H1 (cell line): ENCODE measurements at regions of chr10 and their contacts with region 1.

Region 1: DNA sequence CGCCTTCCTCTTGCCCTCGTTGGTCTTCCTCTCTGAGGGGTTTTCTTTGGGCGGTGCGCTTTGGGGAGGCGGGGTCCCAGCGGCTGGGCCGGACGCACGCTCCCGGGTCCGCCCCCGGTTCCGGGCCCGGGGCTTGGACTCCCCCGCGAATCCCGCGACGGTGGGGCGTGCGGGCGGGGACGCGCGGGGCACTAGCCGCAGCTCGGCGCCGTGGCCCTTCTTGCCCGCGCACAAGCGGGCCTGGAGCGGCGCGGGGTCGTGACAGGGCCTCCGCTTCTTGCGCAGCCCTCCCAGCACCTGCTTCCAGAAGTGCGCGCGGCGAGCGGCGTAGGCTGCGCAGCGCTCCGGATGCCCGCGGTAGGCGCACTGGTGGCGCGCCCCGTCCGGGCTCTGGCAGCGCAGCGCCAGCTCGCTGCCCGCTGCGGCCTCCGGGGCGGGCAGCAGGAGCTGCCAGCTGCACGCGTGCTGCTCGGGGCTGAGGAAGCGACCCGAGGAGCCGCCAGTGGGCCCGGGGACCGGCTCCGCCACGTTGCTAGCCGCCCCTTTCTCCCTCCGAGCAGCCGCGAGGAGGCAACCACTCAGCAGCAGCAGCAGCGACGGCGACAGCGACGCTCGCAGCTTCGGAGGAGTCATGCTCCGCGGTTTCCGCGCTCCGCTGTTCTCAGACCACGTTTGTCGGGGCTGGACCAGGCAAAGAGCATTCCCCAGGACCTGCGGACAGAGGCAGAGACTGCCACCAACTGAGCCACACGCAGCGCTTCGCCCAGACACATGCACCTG is 759 bp downstream of the FGFBP3 start:
- DNase-seq: peak in 1 of 2 experiments; percentile 85
- H3K4me3 ChIP-seq: peak overlapping the region; percentile 69 to 88 (median 80)
- H3K27ac ChIP-seq: peak overlapping the region; percentile 64; the same call in 1 of the 2 replicates
- H3K4me1 ChIP-seq: peaks cover 1 to 7% (median 4%) of the 10 kb centered on the region in 4 experiments; a peak in 3 of 7 replicates
- H3K27me3 ChIP-seq: no peaks in the 10 kb centered on the region
- CTCF ChIP-seq: peak; percentile 61 to 65 (median 61)
- EP300 ChIP-seq: no peak
- POLR2A ChIP-seq: peak; percentile 3 to 73
- RAD21 ChIP-seq: peak; percentile 39 to 47; a peak in 3 of 4 replicates

Region 2: GRCh38 chr10:91758303-91759146 is 150.0 kb before region 1 on chr10:
- CTCF ChIA-PET with region 1: interaction called, 14 read pairs
- POLR2A ChIA-PET with region 1: interaction called, 4 read pairs
- DNase-seq: no peak
- H3K4me3 ChIP-seq: no peak overlapping the region
- H3K27ac ChIP-seq: no peak overlapping the region
- H3K4me1 ChIP-seq: no peaks in the 10 kb centered on the region
- H3K27me3 ChIP-seq: no peaks in the 10 kb centered on the region
- CTCF ChIP-seq: peak in 2 of 3 experiments; percentile 64 to 66; a peak in 2 of 4 replicates
- EP300 ChIP-seq: no peak
- POLR2A ChIP-seq: no peak
- RAD21 ChIP-seq: peak; percentile 93 to 95

Region 3: DNA sequence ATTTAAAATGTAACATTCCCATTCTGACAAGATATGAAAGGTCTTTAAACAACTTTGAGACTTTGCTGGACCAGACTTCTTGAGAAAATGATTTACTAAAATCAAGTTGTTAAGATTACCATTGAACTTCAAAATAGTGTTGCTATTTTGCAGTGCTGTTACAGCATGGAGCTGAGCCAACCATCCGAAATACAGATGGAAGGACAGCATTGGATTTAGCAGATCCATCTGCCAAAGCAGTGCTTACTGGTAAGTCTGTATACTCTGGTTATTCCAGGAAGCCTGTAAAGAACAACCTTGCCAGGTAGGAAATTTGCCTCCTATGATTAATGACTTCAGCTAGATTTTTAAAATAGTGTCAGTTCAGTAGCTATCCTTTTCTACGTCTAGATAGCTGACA is 91.5 kb before region 1 on chr10:
- CTCF ChIA-PET with region 1: interaction called, 11 read pairs
- POLR2A ChIA-PET with region 1: no interaction called
- DNase-seq: no peak
- H3K4me3 ChIP-seq: no peak overlapping the region
- H3K27ac ChIP-seq: no peak overlapping the region
- H3K4me1 ChIP-seq: no peaks in the 10 kb centered on the region
- H3K27me3 ChIP-seq: no peaks in the 10 kb centered on the region
- CTCF ChIP-seq: no peak
- EP300 ChIP-seq: no peak
- POLR2A ChIP-seq: no peak
- RAD21 ChIP-seq: no peak

Region 4: DNA sequence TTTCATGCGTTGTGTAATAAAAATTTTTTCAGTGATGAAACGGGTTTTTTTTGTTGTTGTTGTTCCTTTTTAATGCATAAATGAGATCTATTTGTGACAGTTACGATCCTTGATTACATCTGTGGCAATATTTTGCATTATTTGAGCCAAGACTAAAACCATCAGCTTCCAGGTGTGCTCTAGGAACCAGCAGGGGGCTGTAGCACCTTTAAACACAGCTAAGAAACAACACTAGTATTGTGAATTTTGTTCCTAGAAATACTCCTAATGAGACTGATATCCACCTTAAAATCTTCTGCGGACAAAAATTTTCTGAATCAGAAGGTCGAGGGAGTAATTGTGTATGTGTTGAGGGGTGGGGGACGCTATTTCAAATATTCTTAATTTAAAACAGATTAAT is 51.9 kb before region 1 on chr10:
- CTCF ChIA-PET with region 1: interaction called, 16 read pairs
- POLR2A ChIA-PET with region 1: interaction called, 4 read pairs
- DNase-seq: no peak
- H3K4me3 ChIP-seq: no peak overlapping the region
- H3K27ac ChIP-seq: no peak overlapping the region
- H3K4me1 ChIP-seq: no peaks in the 10 kb centered on the region
- H3K27me3 ChIP-seq: no peaks in the 10 kb centered on the region
- CTCF ChIP-seq: peak in 2 of 3 experiments; percentile 42; a peak in 2 of 4 replicates
- EP300 ChIP-seq: no peak
- POLR2A ChIP-seq: no peak
- RAD21 ChIP-seq: peak; percentile 61 to 70

Region 5: DNA sequence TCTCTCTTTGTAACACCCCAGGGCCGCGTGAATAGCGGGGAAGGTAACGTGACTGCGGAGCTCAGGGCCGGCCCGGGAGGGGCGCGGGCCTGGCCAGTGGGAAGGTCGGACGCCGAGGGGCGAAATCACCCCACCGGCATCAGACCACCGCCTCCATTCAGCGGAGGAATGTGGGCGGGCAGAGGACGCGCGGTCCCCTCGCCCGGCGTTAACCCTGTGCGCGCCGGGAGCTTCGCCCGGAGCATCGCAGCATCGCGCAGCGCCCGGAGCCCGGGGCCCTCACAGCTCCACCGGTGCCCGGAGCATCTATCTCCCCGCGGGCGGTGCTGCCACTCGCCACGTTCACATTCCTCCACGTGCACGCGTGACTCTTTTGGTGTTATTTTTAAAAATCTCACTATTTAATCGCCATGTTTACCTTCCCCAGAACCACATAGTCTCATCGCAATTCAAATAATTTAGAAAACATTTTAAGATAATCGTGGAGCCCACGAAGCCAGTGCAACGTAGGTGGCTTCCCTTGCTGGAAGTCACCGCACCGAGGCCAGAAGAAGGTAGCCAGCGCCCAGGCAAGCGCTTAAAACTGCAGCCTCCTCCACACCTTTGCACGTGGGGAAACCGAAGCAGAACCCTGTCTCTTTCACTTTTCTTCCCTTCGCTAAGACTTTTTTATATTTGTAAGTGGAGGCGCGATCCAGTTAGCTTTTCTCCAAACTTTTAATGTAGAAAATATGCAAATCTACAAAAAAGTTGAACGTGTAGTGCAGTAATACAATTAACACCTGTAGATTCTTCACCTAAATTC is 21.1 kb before region 1 on chr10:
- CTCF ChIA-PET with region 1: interaction called, 10 read pairs
- POLR2A ChIA-PET with region 1: interaction called, 26 read pairs
- DNase-seq: peak; percentile 89 to 90
- H3K4me3 ChIP-seq: peak overlapping the region; percentile 18 to 48 (median 27); a peak in 5 of 8 replicates
- H3K27ac ChIP-seq: peak overlapping the region; percentile 74
- H3K4me1 ChIP-seq: peaks cover 11 to 31% (median 23%) of the 10 kb centered on the region in 4 experiments
- H3K27me3 ChIP-seq: no peaks in the 10 kb centered on the region
- CTCF ChIP-seq: no peak
- EP300 ChIP-seq: peak in 1 of 2 experiments; percentile 84; a peak in 1 of 3 replicates
- POLR2A ChIP-seq: peak; percentile 31 to 80
- RAD21 ChIP-seq: no peak

Region 6: DNA sequence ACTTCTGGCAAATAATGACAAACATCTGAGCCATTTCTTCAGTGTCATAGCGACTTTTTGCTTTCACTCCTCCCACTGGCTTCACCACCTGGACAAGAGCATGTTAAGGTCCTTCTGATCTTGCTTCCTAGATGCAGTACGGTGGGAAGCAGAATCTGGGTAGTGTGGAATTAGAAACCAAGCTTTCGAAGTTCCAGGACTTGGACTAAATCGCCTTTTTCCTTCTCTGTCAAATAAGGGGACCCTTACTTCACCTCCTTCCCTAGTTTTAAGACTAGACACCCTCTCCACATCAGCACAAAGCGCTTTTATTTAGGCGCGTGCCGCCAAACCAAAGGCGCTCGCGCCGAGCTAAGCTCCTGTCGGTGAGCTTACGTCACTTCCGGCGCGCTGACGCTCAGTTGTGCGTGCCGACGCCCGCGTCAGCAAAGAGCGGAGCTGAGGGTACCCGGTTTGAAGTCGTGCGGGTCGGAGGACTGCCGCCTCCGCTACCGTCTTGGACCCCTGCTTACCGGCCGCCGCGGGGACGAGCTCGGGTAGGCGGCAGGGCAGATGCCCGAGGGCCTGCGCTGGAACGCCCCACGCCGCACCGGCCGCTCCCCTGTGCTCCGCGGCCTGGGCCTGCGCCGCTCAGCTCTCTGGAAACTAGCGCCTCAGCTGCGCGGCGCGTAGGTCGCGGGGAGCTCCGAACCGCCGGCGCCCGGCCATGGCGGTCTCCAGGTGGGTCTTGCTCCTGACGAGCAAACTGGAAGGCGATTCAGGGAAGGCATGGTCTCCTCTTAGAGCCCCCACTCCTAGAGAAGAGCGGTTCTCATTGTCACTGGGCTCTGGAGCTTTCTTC is 15.1 kb after region 1 on chr10 and contains the start of gene BTAF1:
- CTCF ChIA-PET with region 1: interaction called, 8 read pairs
- POLR2A ChIA-PET with region 1: interaction called, 14 read pairs
- DNase-seq: peak; percentile 86 to 90
- H3K4me3 ChIP-seq: peak within 1 kb of the TSS; percentile 72 to 87 (median 76)
- H3K27ac ChIP-seq: peak within 1 kb of the TSS; percentile 89
- H3K4me1 ChIP-seq: no peaks in the 10 kb centered on the region; a peak in 1 of 7 replicates
- H3K27me3 ChIP-seq: no peaks in the 10 kb centered on the region
- CTCF ChIP-seq: no peak
- EP300 ChIP-seq: no peak; a peak in 1 of 3 replicates
- POLR2A ChIP-seq: peak; percentile 87 to 88
- RAD21 ChIP-seq: no peak
- total RNA-seq, gene BTAF1: 39.1 TPM in 2 replicates

Region 7: GRCh38 chr10:91969297-91969696 is 60.8 kb after region 1 on chr10:
- CTCF ChIA-PET with region 1: no interaction called
- POLR2A ChIA-PET with region 1: no interaction called
- DNase-seq: no peak
- H3K4me3 ChIP-seq: no peak overlapping the region
- H3K27ac ChIP-seq: no peak overlapping the region
- H3K4me1 ChIP-seq: no peaks in the 10 kb centered on the region
- H3K27me3 ChIP-seq: no peaks in the 10 kb centered on the region
- CTCF ChIP-seq: no peak
- EP300 ChIP-seq: no peak
- POLR2A ChIP-seq: no peak
- RAD21 ChIP-seq: no peak

Region 8: DNA sequence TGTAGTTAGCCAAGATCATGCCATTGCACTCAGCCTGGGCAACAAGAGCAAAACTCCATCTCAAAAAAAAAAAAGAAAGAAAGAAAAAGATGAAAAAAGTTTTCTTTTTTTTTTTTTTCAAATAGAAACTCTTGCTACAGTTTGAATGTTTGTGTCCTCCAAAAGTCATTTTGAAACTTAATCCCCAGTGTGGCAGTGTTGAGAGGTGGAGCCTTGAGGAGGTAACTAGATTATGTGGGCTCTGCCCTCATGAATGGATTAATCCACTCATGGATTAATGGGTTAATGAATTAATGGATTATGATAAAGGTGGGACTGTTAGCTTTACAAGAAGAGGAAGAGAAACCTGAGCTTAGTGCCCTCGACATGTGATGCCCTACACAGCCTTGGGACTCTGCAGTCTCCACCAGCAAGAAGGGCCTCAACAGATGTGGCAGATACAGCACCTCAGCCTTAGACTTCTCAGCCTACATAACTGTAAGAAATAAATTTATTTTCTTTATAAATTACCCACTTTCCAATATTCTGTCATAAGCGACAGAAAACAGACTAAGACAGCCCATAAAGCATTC is 357.2 kb after region 1 on chr10:
- CTCF ChIA-PET with region 1: no interaction called
- POLR2A ChIA-PET with region 1: no interaction called
- DNase-seq: no peak
- H3K4me3 ChIP-seq: no peak overlapping the region
- H3K27ac ChIP-seq: no peak overlapping the region
- H3K4me1 ChIP-seq: no peaks in the 10 kb centered on the region
- H3K27me3 ChIP-seq: no peaks in the 10 kb centered on the region
- CTCF ChIP-seq: no peak
- EP300 ChIP-seq: no peak
- POLR2A ChIP-seq: no peak
- RAD21 ChIP-seq: no peak